SK-N-SH (cell line): ENCODE measurements at regions of chr9 and their contacts with region 1.

Region 1: GRCh38 chr9:14353222-14354056 is 39.5 kb upstream of the NFIB start:
- DNase-seq: peak; percentile 91
- H3K4me3 ChIP-seq: peak overlapping the region; percentile 28 to 49
- H3K27ac ChIP-seq: no peak overlapping the region; a peak in 1 of 4 replicates
- H3K4me1 ChIP-seq: peaks cover 0 to 12% of the 10 kb centered on the region in 2 experiments; a peak in 1 of 4 replicates
- H3K27me3 ChIP-seq: no peaks in the 10 kb centered on the region
- CTCF ChIP-seq: peak; percentile 95
- EP300 ChIP-seq: no peak
- RAD21 ChIP-seq: peak; percentile 91

Region 2: DNA sequence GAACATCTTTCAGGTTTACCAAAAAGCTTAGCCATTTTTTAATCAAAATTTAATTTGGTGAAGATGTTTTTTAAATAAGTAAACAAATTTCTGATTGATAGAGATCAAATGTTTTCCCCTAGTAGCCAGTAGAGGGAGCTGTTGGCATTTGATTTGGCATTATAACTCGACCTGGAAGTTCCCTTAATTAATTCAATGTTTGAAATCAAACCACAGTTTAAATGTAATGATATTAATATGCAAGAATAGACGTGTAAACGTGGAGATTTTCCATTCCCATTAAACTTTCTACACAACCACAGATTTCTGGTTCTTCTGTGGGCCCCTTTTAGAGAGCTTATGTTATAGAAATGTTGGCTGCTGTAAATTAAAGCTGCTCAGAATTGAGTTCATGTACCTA is 925.9 kb before region 1 on chr9:
- CTCF ChIA-PET with region 1: interaction called, 52 read pairs
- POLR2A ChIA-PET with region 1: no interaction called
- DNase-seq: peak; percentile 30
- H3K4me3 ChIP-seq: no peak overlapping the region; a peak in 2 of 4 replicates
- H3K27ac ChIP-seq: peak overlapping the region in 1 of 2 experiments; percentile 34; a peak in 2 of 4 replicates
- H3K4me1 ChIP-seq: no peaks in the 10 kb centered on the region; a peak in 2 of 4 replicates
- H3K27me3 ChIP-seq: no peaks in the 10 kb centered on the region
- CTCF ChIP-seq: peak; percentile 87
- EP300 ChIP-seq: no peak
- RAD21 ChIP-seq: peak; percentile 88

Region 3: GRCh38 chr9:13450723-13451122 is 902.7 kb before region 1 on chr9:
- CTCF ChIA-PET with region 1: interaction called, 26 read pairs
- POLR2A ChIA-PET with region 1: no interaction called
- DNase-seq: no peak
- H3K4me3 ChIP-seq: no peak overlapping the region
- H3K27ac ChIP-seq: no peak overlapping the region
- H3K4me1 ChIP-seq: no peaks in the 10 kb centered on the region; a peak in 2 of 4 replicates
- H3K27me3 ChIP-seq: no peaks in the 10 kb centered on the region
- CTCF ChIP-seq: no peak
- EP300 ChIP-seq: no peak
- RAD21 ChIP-seq: no peak

Region 4: DNA sequence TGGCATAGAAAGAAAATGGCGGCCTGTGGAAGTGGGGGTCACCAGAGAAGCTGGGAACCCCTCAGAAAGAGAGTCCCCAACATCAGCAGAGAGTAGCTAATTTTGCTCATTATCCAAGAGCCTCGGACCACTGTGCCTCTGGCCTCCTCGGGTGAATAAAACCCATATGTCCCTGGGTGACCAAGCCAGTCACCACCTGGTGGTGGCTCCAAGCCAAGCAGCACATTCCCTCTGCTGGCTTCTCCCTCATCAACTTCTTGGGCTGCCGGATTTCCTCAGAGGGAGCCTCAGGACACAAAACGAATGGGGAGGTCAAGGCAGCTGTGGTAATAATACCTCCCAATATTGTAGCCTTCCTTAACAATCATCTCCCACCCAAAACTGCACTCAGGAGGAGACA is 282.0 kb before region 1 on chr9:
- CTCF ChIA-PET with region 1: no interaction called
- POLR2A ChIA-PET with region 1: no interaction called
- DNase-seq: no peak
- H3K4me3 ChIP-seq: no peak overlapping the region
- H3K27ac ChIP-seq: no peak overlapping the region
- H3K4me1 ChIP-seq: no peaks in the 10 kb centered on the region; a peak in 1 of 4 replicates
- H3K27me3 ChIP-seq: no peaks in the 10 kb centered on the region
- CTCF ChIP-seq: no peak
- EP300 ChIP-seq: no peak
- RAD21 ChIP-seq: no peak

Region 5: DNA sequence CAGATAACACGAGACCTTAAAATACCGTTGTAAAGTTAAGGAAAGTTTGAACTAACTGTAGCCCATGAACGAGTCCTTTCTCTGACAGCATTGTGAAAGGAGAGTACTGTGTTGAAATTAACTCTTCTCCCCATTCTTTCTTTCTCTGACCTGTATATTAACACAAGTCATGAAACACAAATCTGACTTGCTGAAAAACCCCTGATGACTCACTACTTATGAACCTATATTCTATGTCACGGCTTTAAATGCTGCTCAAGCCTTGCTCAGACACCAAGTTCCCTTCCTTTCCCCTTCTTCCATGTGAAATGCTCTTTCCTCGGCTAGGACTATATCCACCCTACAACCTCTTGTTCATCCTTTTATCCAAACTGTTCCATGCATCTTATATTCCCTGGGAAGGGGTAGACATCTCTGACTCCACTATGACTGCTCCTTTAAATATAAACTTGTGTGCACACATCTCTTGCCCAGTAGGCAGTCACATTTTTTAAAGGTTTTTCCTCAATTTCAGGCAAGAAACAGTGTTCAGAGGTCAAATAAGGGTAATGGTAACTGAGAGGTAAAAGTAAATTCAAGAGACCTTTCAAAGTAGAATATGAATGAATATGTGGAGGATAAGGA is 182.4 kb before region 1 on chr9:
- CTCF ChIA-PET with region 1: no interaction called
- POLR2A ChIA-PET with region 1: no interaction called
- DNase-seq: no peak
- H3K4me3 ChIP-seq: no peak overlapping the region
- H3K27ac ChIP-seq: peak overlapping the region in 1 of 2 experiments; percentile 4; a peak in 1 of 4 replicates
- H3K4me1 ChIP-seq: peaks cover 0 to 12% of the 10 kb centered on the region in 2 experiments
- H3K27me3 ChIP-seq: no peaks in the 10 kb centered on the region
- CTCF ChIP-seq: no peak
- EP300 ChIP-seq: no peak
- RAD21 ChIP-seq: no peak

Region 6: GRCh38 chr9:14326264-14326826 is 27.1 kb before region 1 on chr9:
- CTCF ChIA-PET with region 1: interaction called, 15 read pairs
- POLR2A ChIA-PET with region 1: no interaction called
- DNase-seq: no peak
- H3K4me3 ChIP-seq: no peak overlapping the region
- H3K27ac ChIP-seq: peak overlapping the region in 1 of 2 experiments; percentile 51; a peak in 2 of 4 replicates
- H3K4me1 ChIP-seq: peaks cover 4 to 20% of the 10 kb centered on the region in 2 experiments; a peak in 2 of 4 replicates
- H3K27me3 ChIP-seq: no peaks in the 10 kb centered on the region
- CTCF ChIP-seq: no peak
- EP300 ChIP-seq: no peak; a peak in 1 of 4 replicates
- RAD21 ChIP-seq: no peak

Region 7: GRCh38 chr9:14372437-14373335 is 19.2 kb after region 1 on chr9:
- CTCF ChIA-PET with region 1: interaction called, 24 read pairs
- POLR2A ChIA-PET with region 1: interaction called, 3 read pairs
- DNase-seq: peak; percentile 67
- H3K4me3 ChIP-seq: peak overlapping the region in 1 of 2 experiments; percentile 21; a peak in 2 of 4 replicates
- H3K27ac ChIP-seq: peak overlapping the region; percentile 93 to 97
- H3K4me1 ChIP-seq: peaks cover 14 to 16% of the 10 kb centered on the region in 2 experiments; a peak in 3 of 4 replicates
- H3K27me3 ChIP-seq: no peaks in the 10 kb centered on the region
- CTCF ChIP-seq: no peak
- EP300 ChIP-seq: peak; percentile 65 to 93; a peak in 3 of 4 replicates
- RAD21 ChIP-seq: peak; percentile 9; the same call in 1 of the 2 replicates

Region 8: DNA sequence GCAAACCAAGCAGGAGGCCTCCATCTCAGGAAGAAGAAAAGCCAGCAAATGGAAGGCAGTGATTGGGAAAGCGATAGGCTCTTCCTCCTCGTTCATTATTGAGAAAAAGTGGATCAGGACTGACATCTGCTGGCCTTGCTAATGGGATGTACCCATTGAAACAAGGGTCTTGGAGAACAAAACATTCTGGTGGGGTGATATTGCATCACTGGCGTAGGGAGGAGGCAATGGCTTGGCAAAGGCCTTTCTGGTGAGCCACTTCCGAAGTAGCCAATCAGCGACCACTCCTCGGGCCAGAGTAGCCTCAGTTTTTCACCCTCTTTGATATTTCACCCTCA is 47.2 kb after region 1 on chr9:
- CTCF ChIA-PET with region 1: no interaction called
- POLR2A ChIA-PET with region 1: no interaction called
- DNase-seq: peak; percentile 17
- H3K4me3 ChIP-seq: no peak overlapping the region
- H3K27ac ChIP-seq: no peak overlapping the region
- H3K4me1 ChIP-seq: peaks cover 5 to 8% of the 10 kb centered on the region in 2 experiments; a peak in 2 of 4 replicates
- H3K27me3 ChIP-seq: no peaks in the 10 kb centered on the region
- CTCF ChIP-seq: peak; percentile 52
- EP300 ChIP-seq: no peak
- RAD21 ChIP-seq: peak; percentile 67

Region 9: DNA sequence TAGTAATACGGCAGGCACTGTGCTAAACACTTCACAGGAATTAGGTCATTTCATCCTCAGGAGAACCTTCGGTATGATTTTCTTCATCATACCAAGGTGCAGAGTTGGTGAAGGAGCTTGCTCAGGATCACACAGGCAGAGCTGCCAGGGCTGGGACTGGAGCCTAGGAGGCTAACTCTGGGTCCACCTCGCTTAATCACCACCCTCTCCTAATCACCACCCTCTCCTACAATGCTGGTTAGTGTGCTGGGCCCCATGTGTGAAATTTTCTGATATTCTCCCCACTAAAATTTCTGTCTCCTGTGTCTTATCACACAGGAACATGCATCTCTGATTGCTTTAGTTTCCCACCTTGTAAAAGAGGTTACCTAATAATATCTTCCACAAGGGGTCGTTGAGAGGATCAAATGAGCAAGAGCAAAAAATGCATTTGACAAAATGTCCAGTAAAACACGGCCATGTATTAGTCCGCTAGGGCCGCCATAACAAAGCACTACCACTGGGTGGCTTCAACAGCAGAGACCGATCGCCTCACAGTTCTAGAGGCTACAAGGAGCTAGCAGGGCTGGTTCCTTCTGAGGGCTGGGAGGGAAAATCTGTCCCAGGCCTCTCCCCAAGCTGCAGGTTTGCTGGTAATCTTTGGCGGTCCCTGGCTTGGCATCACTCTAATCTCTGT is 88.7 kb after region 1 on chr9:
- CTCF ChIA-PET with region 1: interaction called, 12 read pairs
- POLR2A ChIA-PET with region 1: no interaction called
- DNase-seq: no peak
- H3K4me3 ChIP-seq: no peak overlapping the region
- H3K27ac ChIP-seq: no peak overlapping the region
- H3K4me1 ChIP-seq: peaks cover 8 to 28% of the 10 kb centered on the region in 2 experiments; a peak in 2 of 4 replicates
- H3K27me3 ChIP-seq: no peaks in the 10 kb centered on the region
- CTCF ChIP-seq: peak; percentile 47
- EP300 ChIP-seq: no peak
- RAD21 ChIP-seq: 0 out of 2 replicates have a peak, but pooled peaks have one; percentile 9